Endothelial cell of umbilical vein (primary cell): ENCODE measurements at regions of chr10 and their contacts with region 1.

Region 1: GRCh38 chr10:123008439-123009205 is at the starts of genes ACADSB and IKZF5:
- DNase-seq: peak; percentile 97
- H3K4me3 ChIP-seq: peak within 1 kb of the TSS; percentile 80 to 93 (median 82)
- H3K27ac ChIP-seq: peak within 1 kb of the TSS; percentile 63
- H3K4me1 ChIP-seq: peaks cover 21% of the 10 kb centered on the region
- H3K27me3 ChIP-seq: no peaks in the 10 kb centered on the region
- CTCF ChIP-seq: no peak
- POLR2A ChIP-seq: peak; percentile 80
- total RNA-seq, gene ACADSB: 10.8 and 15.2 TPM in 2 replicates
- total RNA-seq, gene IKZF5: 10.0 and 10.3 TPM in 2 replicates

Region 2: GRCh38 chr10:122879339-122880273 is 129.0 kb before region 1 on chr10 and contains the start of gene FAM24B:
- CTCF ChIA-PET with region 1: no interaction called
- POLR2A ChIA-PET with region 1: no interaction called
- dilution Hi-C with region 1: no loop called
- intact Hi-C with region 1: loop called (anchors 2 kb)
- DNase-seq: peak; percentile 99
- H3K4me3 ChIP-seq: peak within 1 kb of the TSS; percentile 39 to 56 (median 55)
- H3K27ac ChIP-seq: peak within 1 kb of the TSS; percentile 43
- H3K4me1 ChIP-seq: peaks cover 26% of the 10 kb centered on the region
- H3K27me3 ChIP-seq: no peaks in the 10 kb centered on the region
- CTCF ChIP-seq: no peak
- POLR2A ChIP-seq: peak; percentile 42
- total RNA-seq, gene FAM24B: 8.5 and 10.6 TPM in 2 replicates

Region 3: GRCh38 chr10:122980209-122981065 is 28.2 kb before region 1 on chr10 and contains the start of gene PSTK:
- CTCF ChIA-PET with region 1: interaction called, 30 read pairs
- POLR2A ChIA-PET with region 1: interaction called, 4 read pairs
- dilution Hi-C with region 1: no loop called
- intact Hi-C with region 1: loop called (anchors 1 kb)
- DNase-seq: peak; percentile 92
- H3K4me3 ChIP-seq: peak within 1 kb of the TSS; percentile 36 to 80 (median 55)
- H3K27ac ChIP-seq: peak within 1 kb of the TSS; percentile 82
- H3K4me1 ChIP-seq: peaks cover 8% of the 10 kb centered on the region
- H3K27me3 ChIP-seq: peaks cover 0 to 1% of the 10 kb centered on the region in 2 experiments
- CTCF ChIP-seq: peak; percentile 84 to 97
- POLR2A ChIP-seq: peak; percentile 56
- total RNA-seq, gene PSTK: 1.6 and 2.7 TPM in 2 replicates

Region 4: GRCh38 chr10:123154092-123154921 is 145.7 kb after region 1 on chr10 and contains the start of gene BUB3:
- CTCF ChIA-PET with region 1: no interaction called
- POLR2A ChIA-PET with region 1: interaction called, 4 read pairs
- dilution Hi-C with region 1: no loop called
- intact Hi-C with region 1: loop called (anchors 1 kb)
- DNase-seq: peak; percentile 100
- H3K4me3 ChIP-seq: peak within 1 kb of the TSS; percentile 61 to 92 (median 90)
- H3K27ac ChIP-seq: peak within 1 kb of the TSS; percentile 81
- H3K4me1 ChIP-seq: peaks cover 48% of the 10 kb centered on the region
- H3K27me3 ChIP-seq: peaks cover 35 to 41% of the 10 kb centered on the region in 2 experiments
- CTCF ChIP-seq: no peak
- POLR2A ChIP-seq: peak; percentile 91
- total RNA-seq, gene BUB3: 178 and 193 TPM in 2 replicates

Region 5: GRCh38 chr10:124601431-124602120 is 1593.0 kb after region 1 on chr10:
- CTCF ChIA-PET with region 1: no interaction called
- POLR2A ChIA-PET with region 1: no interaction called
- dilution Hi-C with region 1: no loop called
- intact Hi-C with region 1: loop called (anchors 10 kb)
- DNase-seq: no peak
- H3K4me3 ChIP-seq: no peak overlapping the region
- H3K27ac ChIP-seq: no peak overlapping the region
- H3K4me1 ChIP-seq: no peaks in the 10 kb centered on the region
- H3K27me3 ChIP-seq: no peaks in the 10 kb centered on the region
- CTCF ChIP-seq: no peak
- POLR2A ChIP-seq: no peak